ENCODE measurements at regions of chr11 and their contacts with region 1.

Region 1: DNA sequence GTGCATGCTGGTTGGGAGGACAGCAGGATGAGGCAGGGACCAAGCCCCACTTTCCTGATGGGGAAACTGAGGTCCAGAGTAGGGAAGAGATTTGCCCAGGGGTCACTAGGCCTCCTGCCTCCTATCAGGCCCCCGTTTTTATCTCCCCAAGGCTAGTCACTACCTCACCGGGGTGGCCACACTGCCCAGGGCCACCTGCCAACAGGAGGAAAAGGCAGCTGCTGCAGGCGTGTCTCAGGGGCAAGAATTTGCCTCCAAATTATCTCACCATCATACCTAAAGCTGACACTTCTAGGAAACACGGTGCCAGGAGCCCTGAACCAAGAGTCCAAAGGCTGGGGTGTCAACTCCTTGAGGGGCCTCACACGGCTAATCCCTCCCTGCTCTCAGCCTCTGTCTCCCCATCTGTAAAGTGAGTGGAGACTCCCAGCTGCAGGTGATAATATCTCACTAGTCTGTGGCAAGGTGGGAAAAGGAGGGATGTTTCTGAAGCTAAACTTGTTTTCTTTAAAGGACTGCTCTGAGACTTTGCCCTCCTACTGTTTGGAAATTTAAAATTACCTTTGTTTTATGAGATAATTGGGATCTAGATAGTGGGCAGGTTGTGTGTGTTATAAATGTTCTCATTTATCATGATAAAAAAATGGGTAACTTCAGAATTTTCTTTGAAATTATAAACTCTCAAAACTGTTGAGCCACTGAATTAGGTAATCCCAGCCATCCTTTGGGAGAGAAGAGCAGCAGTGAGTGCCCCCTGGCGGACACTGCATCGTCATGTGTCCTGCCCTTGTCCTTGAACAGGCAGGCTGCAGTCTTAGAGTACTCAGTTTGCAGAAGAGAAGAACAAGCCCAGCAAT is 60.0 kb downstream of the MYO7A start:
- DNase-seq: peak; percentile 83
- ATAC-seq: peak; percentile 84
- H3K4me3 Mint-ChIP-seq: no peak overlapping the region
- H3K27ac Mint-ChIP-seq: no peak overlapping the region
- H3K4me1 Mint-ChIP-seq: peaks cover 9% of the 10 kb centered on the region
- H3K27me3 Mint-ChIP-seq: peaks cover 4% of the 10 kb centered on the region

Region 2: DNA sequence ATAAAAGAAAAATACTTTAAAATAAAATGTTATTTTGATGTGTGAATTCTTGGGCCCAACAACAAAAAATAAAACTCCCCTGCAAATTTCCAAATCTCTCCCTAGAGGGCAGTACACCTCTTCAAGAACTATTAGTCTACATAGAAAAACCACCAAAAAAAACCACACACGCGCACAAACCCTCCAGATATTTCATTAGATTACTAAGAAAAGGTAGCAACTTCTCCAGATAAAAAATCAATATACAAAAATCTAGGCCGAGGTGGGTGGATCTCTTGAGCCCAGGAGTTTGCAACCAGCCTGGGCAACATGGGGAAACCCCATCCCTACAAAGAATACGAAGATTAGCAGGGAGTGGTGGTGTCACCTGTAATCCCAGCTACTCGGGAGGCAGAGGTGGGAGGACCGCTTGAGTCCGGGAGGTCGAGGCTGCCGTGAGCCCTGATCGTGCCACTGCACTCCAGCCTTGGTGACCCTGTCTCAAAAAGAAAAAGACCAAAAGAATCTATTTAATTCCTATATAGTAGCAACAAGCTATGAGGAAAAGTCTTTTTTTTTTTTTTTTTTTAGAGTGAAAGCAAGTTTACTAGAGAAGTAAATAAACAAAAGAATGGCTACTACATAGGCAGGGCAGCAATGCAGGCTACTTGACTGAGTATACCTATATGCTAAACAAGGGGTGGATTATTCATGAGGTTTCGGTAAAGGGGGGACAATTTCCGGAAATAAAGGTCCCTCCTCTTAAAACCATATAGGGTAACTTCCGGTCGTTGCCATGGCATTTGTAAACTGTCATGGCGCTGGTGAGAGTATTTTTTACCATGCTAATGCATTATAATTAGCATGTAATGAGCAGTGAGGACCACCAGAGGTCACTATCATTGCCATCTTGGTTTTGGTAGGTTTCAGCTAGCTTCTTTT is 140.7 kb before region 1 on chr11:
- CTCF ChIA-PET with region 1: interaction called, 11 read pairs
- DNase-seq: peak; percentile 88
- ATAC-seq: peak; percentile 91
- H3K4me3 Mint-ChIP-seq: peak overlapping the region; percentile 64
- H3K27ac Mint-ChIP-seq: peak overlapping the region; percentile 3
- H3K4me1 Mint-ChIP-seq: peaks cover 10% of the 10 kb centered on the region
- H3K27me3 Mint-ChIP-seq: peaks cover 27% of the 10 kb centered on the region

Region 3: GRCh38 chr11:77121876-77122575 is 66.0 kb before region 1 on chr11:
- CTCF ChIA-PET with region 1: interaction called, 162 read pairs
- DNase-seq: no peak
- ATAC-seq: no peak
- H3K4me3 Mint-ChIP-seq: no peak overlapping the region
- H3K27ac Mint-ChIP-seq: no peak overlapping the region
- H3K4me1 Mint-ChIP-seq: peaks cover 3% of the 10 kb centered on the region
- H3K27me3 Mint-ChIP-seq: peaks cover 4% of the 10 kb centered on the region

Region 4: DNA sequence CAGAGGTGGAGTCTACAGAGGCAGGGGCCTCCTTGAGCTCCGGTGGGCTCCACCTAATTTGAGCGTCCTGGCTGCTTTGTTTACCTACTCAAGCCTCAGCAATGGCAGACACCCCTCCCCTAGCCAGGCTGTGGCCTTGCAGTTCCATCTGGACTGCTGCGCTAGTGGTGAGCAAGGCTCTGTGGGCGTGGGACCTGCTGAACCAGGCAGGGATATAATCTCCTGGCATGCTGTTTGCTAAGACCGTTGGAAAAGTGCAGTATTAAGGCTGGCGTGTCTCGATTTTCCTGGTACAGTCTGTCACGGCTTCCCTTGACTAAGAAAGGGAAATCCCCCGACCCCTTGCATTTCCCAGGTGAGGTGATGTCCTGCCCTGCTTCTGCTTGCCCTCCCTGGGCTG is 35.8 kb after region 1 on chr11:
- CTCF ChIA-PET with region 1: no interaction called
- DNase-seq: no peak
- ATAC-seq: no peak
- H3K4me3 Mint-ChIP-seq: no peak overlapping the region
- H3K27ac Mint-ChIP-seq: no peak overlapping the region
- H3K4me1 Mint-ChIP-seq: no peaks in the 10 kb centered on the region
- H3K27me3 Mint-ChIP-seq: peaks cover 48% of the 10 kb centered on the region

Region 5: DNA sequence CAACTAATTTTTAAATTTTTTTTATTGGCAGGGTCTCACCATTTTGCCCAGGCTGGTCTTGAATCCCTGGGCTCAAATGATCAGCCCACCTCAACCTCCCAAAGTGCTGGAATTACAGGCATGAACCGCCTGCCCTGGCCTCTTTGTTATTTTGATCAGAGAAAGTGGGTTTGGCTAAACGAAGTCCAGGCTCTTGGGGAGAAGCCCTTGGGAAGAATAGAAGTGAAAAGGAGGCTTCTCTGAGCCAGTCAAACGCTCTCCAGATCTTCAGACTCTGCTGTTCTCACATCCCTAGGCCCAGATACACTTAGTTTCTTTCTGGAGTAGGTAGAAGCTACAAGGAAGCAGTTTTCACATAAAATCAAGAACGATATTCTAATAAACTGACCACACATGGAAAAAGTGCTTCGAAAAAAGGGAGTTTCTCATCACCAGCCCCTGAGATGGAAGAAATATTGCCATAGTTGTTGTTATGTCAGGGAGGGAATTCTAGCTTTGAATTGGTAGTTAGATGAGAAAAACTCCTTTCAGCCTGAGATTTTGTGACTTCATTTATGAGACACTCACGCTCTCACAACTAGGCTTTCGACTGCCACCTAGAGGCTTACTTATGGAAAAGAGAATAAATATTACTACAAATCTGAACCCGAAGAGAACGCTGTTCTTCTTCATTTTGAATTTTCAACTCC is 360.0 kb after region 1 on chr11:
- CTCF ChIA-PET with region 1: interaction called, 15 read pairs
- DNase-seq: no peak
- ATAC-seq: no peak
- H3K4me3 Mint-ChIP-seq: no peak overlapping the region
- H3K27ac Mint-ChIP-seq: no peak overlapping the region
- H3K4me1 Mint-ChIP-seq: no peaks in the 10 kb centered on the region
- H3K27me3 Mint-ChIP-seq: no peaks in the 10 kb centered on the region

Measured in activated CD8-positive, alpha-beta memory T cell treated with anti-CD3 and anti-CD28 coated beads, Interleukin-2, amount 10 ng/mL, durations not matched to agents 7 days and 5 days (primary cell).